ENCODE measurements at regions of chr5 and their contacts with region 1.

Region 1: GRCh38 chr5:671459-672328 is 21.5 kb downstream of the TPPP start:
- DNase-seq: peak; percentile 86
- ATAC-seq: peak; percentile 88

Region 2: DNA sequence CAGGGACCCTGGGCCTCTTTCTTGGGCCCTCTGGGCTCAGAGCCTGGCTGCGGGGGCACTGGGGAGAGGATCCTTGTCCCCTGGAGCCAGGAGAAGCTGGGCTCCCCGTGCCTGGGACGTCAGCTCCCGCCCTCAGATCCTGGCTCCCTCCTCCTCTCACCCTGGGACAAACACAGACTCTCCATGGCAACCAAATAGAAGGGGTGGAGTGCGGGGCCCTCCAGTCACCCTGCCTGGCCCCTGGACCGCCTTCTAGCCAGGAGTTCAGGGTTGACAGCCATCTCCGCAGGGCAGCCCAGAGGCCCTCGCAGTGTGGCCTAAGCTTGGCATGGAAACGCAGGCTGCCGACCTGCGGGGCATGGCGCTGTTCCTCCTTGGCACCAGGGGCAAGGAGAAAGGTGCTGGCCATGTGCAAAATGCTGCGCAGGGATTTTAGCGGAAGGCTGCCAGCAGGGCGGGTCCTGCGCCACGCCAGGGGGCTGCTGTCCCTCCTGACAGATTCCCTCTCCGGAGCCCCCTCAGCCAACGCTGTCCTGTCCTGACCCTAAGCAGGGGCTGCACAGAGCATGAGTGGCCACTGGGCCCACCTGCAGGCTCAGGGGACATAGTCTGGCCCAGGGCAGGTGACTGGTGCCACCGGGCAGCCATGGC is 178.1 kb after region 1 on chr5:
- intact Hi-C with region 1: no loop called
- DNase-seq: peak; percentile 49
- ATAC-seq: peak; percentile 36

Region 3: DNA sequence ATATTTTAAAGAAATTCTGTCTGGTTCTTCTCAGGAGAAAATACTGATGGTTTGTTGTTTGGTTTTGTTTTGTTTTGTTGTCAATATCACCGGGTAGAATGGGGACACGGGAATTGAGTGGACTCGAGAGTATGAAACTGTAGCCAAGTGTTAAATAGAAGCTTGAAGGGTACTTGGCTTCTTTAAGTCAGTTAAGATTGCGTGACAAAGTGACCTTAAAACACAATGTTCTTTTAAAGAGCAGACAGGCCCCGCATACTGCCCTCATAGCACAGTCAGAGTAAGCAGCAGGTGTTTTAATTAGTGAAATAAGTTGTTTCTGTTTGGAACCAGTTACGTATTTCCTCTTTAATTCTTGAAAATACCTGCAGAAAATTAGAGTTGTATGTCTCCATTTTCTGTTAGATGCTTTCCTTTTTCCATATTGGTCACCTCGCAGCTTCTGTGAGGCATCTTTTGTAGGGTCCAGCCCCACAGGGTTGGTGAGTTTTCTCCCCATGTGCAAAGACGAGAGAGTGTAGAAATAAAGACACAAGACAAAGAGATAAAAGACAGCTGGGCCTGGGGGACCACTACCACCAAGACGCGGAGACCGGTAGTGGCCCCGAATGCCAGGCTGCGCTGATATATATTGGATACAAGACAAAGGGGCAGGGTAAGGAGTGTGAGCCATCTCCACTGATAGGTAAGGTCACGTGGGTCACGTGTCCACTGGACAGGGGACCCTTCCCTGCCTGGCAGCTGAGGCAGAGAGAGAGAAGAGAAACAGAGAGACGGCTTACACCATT is 230.6 kb after region 1 on chr5:
- intact Hi-C with region 1: loop called (anchors 5 kb)
- DNase-seq: peak; percentile 19
- ATAC-seq: no peak